ENCODE measurements at regions of chr10 and their contacts with region 1.

Region 1: GRCh38 chr10:11986593-11987216 is 55.9 kb downstream of the UPF2 start:
- DNase-seq: no peak
- H3K4me3 ChIP-seq: no peak overlapping the region
- H3K27ac ChIP-seq: no peak overlapping the region
- H3K4me1 ChIP-seq: no peaks in the 10 kb centered on the region
- H3K27me3 ChIP-seq: no peaks in the 10 kb centered on the region
- CTCF ChIP-seq: peak; percentile 80 to 85 (median 82)
- POLR2A ChIP-seq: no peak

Region 2: DNA sequence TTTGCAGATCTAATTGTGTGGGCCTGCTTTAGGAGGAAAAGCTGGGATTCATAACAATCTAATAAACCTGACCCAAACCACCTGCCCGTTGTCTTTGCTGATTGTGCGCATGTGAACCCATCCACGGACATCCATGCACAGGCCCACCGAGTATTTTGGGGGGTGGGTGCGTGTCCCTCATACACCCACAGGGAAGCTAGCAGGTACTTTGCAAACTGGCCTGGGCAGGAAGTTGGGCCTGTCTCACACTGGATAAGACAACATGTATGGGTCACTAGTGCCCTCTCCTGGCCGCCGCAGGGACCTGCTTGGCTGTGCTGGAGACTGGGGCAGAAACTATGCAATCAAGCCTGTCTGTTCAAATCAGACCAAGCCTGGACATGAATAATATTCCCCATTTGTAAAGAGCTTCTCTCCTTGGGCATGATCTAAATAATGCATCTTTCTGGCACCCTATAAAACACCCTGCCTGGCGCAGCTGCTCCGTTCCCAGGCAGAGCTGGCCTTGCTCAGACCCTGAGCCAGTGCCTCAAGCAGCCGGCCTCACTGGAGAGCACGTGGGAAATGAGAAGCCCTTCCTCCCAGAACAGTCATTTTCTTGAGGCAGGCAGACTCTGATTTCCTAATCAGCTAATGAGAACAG is 228.8 kb before region 1 on chr10:
- intact Hi-C with region 1: no loop called
- DNase-seq: peak in 1 of 2 donors; percentile 93
- H3K4me3 ChIP-seq: no peak overlapping the region
- H3K27ac ChIP-seq: peak overlapping the region; percentile 70
- H3K4me1 ChIP-seq: peaks cover 25% of the 10 kb centered on the region
- H3K27me3 ChIP-seq: no peaks in the 10 kb centered on the region
- CTCF ChIP-seq: peak; percentile 56 to 83 (median 75)
- POLR2A ChIP-seq: no peak

Region 3: GRCh38 chr10:11782793-11783557 is 203.7 kb before region 1 on chr10:
- intact Hi-C with region 1: loop called (anchors 10 kb)
- DNase-seq: no peak
- H3K4me3 ChIP-seq: no peak overlapping the region
- H3K27ac ChIP-seq: no peak overlapping the region
- H3K4me1 ChIP-seq: no peaks in the 10 kb centered on the region
- H3K27me3 ChIP-seq: no peaks in the 10 kb centered on the region
- CTCF ChIP-seq: peak; percentile 17 to 75 (median 49)
- POLR2A ChIP-seq: no peak